Endothelial cell of umbilical vein (primary cell): ENCODE measurements at regions of chr2 and their contacts with region 1.

Region 1: GRCh38 chr2:69914170-69914960 is 544 bp upstream of the MXD1 start:
- DNase-seq: peak; percentile 100
- H3K4me3 ChIP-seq: peak overlapping the region; percentile 62 to 76 (median 65)
- H3K27ac ChIP-seq: peak overlapping the region; percentile 84
- H3K4me1 ChIP-seq: peaks cover 35% of the 10 kb centered on the region
- H3K27me3 ChIP-seq: no peaks in the 10 kb centered on the region
- CTCF ChIP-seq: peak in 1 of 2 donors; percentile 25
- POLR2A ChIP-seq: peak; percentile 84

Region 2: GRCh38 chr2:69893684-69894551 is 20.4 kb before region 1 on chr2 and contains the start of gene SNRNP27:
- CTCF ChIA-PET with region 1: no interaction called
- POLR2A ChIA-PET with region 1: interaction called, 3 read pairs
- dilution Hi-C with region 1: no loop called
- intact Hi-C with region 1: loop called (anchors 2 kb)
- DNase-seq: peak; percentile 70
- H3K4me3 ChIP-seq: peak within 1 kb of the TSS; percentile 76 to 97 (median 91)
- H3K27ac ChIP-seq: peak within 1 kb of the TSS; percentile 90
- H3K4me1 ChIP-seq: peaks cover 10% of the 10 kb centered on the region
- H3K27me3 ChIP-seq: no peaks in the 10 kb centered on the region
- CTCF ChIP-seq: no peak
- POLR2A ChIP-seq: peak; percentile 85
- total RNA-seq, gene SNRNP27: 43.2 and 50.6 TPM in 2 replicates

Region 3: DNA sequence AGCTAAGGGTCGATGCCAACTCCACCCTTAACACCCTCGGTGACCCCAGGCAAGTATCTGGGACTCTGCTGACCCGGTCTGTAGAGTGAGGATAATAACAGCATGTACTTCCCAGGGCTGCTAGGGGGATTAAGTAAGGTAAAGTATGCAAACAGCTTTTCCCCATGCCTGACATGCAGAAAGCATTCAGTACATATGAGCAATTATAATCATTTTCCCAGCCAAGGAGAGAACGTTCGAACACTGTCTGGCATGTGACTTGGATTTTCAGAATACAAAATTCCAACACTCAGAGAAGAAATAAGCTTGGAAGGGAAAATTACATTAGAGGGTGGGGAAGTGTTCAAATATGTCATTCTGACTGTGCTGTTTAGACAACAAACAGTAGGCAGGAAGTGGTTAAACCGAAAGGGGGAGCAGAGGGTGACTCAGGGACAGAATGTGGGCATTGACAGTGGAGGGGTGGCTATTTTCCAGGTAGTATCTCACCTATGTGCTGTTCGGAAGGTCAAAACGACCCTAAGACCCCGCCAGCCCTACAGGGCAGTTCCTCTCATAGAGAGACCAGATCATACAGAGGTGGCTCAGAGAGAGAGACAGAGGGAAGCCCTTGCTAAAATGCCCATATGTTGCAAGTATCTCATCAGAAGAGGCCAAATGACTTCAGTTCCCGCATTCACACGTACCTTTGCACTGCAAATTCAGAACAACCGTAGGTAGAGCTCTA is 32.1 kb after region 1 on chr2:
- CTCF ChIA-PET with region 1: interaction called, 4 read pairs
- POLR2A ChIA-PET with region 1: interaction called, 5 read pairs
- dilution Hi-C with region 1: no loop called
- intact Hi-C with region 1: loop called (anchors 1 kb)
- DNase-seq: peak; percentile 41
- H3K4me3 ChIP-seq: no peak overlapping the region
- H3K27ac ChIP-seq: peak overlapping the region; percentile 54
- H3K4me1 ChIP-seq: peaks cover 25% of the 10 kb centered on the region
- H3K27me3 ChIP-seq: no peaks in the 10 kb centered on the region
- CTCF ChIP-seq: no peak
- POLR2A ChIP-seq: no peak

Region 4: GRCh38 chr2:70086838-70087701 is 172.7 kb after region 1 on chr2 and contains the start of gene PCBP1:
- CTCF ChIA-PET with region 1: interaction called, 3 read pairs
- POLR2A ChIA-PET with region 1: interaction called, 15 read pairs
- dilution Hi-C with region 1: no loop called
- intact Hi-C with region 1: loop called (anchors 1 kb)
- DNase-seq: peak; percentile 88
- H3K4me3 ChIP-seq: peak within 1 kb of the TSS; percentile 90 to 93 (median 91)
- H3K27ac ChIP-seq: peak within 1 kb of the TSS; percentile 100
- H3K4me1 ChIP-seq: peaks cover 29% of the 10 kb centered on the region
- H3K27me3 ChIP-seq: no peaks in the 10 kb centered on the region
- CTCF ChIP-seq: no peak
- POLR2A ChIP-seq: peak; percentile 96
- total RNA-seq, gene PCBP1: 342 and 360 TPM in 2 replicates

Region 5: DNA sequence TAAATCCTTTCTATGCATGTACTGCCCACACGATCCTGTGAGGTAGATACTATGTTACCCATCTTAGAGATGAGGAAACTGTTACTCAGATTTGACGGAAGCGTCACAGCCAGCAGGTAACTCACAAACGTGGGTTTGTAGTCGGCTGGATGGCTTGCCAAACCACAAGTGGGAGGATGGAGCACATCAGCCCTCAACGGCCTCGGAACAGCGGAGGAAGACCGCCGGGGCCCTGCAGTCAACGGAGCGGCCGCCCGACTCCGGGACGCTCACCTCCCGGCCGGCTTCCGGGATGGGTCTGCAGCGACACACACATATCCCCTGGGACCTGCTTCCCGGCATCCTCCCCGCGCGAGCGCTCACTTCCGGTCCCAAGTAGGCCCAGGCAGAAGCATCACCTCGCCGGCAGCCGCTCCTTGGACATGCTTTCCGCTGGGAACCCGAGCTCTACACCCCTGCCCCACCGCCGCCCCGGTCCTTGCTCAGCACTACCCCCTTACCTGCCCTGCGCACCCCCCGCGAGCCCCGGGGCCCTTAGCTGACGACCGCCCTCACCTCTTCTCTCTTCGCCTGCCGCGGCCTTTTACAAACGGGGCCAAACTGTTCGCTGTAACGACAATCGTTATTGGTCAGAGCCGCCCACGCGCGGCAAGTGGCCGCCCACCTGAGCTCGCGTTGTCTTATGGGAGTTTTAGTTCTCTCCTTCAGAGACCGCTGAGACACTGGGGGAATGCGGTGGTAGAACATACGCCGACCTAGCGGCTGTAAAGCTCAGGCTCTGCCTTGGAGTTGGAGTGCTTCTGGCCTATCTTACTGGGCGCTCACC is 276.3 kb after region 1 on chr2 and contains the start of gene C2orf42:
- CTCF ChIA-PET with region 1: interaction called, 8 read pairs
- POLR2A ChIA-PET with region 1: interaction called, 13 read pairs
- dilution Hi-C with region 1: no loop called
- intact Hi-C with region 1: loop called (anchors 1 kb)
- DNase-seq: peak; percentile 98
- H3K4me3 ChIP-seq: peak within 1 kb of the TSS; percentile 52 to 73 (median 60)
- H3K27ac ChIP-seq: peak within 1 kb of the TSS; percentile 67
- H3K4me1 ChIP-seq: no peaks in the 10 kb centered on the region
- H3K27me3 ChIP-seq: no peaks in the 10 kb centered on the region
- CTCF ChIP-seq: peak in 1 of 2 donors; percentile 23
- POLR2A ChIP-seq: peak; percentile 98
- total RNA-seq, gene C2orf42: 12.0 and 13.1 TPM in 2 replicates

Region 6: DNA sequence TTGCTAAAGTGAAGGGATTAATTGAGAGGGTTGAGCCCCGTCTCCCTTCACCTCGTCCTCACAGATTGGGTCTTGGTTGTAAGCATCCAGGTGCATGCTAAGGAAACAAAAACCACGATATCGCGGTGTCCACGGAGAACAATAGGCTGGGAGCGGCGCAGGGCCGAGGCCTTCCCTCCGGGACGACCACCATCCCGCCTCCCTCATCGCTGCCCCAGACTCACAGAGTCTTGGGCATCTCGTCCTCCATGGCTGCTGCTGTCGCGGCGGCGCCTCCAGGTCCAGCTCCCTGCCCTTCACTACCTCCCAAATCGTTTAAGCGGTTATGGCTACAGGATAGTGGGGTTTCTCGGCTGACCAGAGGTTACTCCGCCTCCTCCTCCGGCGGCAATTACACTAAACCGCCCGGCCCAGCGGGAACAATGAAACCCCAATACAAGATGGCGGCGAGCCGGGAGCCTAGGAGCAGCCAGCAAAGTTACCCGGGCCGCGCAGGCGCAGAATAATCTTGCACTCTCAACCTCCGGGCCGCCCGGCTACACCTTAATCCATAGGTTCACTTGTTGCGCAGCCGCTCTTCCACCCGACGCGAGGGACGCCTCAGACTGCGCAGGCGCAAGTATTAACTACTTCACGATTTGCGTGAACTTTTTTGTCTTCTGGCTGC is 333.9 kb after region 1 on chr2 and contains the start of gene TIA1:
- CTCF ChIA-PET with region 1: no interaction called
- POLR2A ChIA-PET with region 1: no interaction called
- dilution Hi-C with region 1: no loop called
- intact Hi-C with region 1: loop called (anchors 10 kb)
- DNase-seq: peak; percentile 99
- H3K4me3 ChIP-seq: peak within 1 kb of the TSS; percentile 75 to 100 (median 97)
- H3K27ac ChIP-seq: peak within 1 kb of the TSS; percentile 82
- H3K4me1 ChIP-seq: peaks cover 23% of the 10 kb centered on the region
- H3K27me3 ChIP-seq: no peaks in the 10 kb centered on the region
- CTCF ChIP-seq: no peak
- POLR2A ChIP-seq: peak; percentile 96
- total RNA-seq, gene TIA1: 140 and 163 TPM in 2 replicates

Region 7: GRCh38 chr2:70523996-70524965 is 609.9 kb after region 1 on chr2:
- CTCF ChIA-PET with region 1: no interaction called
- POLR2A ChIA-PET with region 1: no interaction called
- dilution Hi-C with region 1: no loop called
- intact Hi-C with region 1: no loop called
- DNase-seq: no peak
- H3K4me3 ChIP-seq: no peak overlapping the region
- H3K27ac ChIP-seq: no peak overlapping the region
- H3K4me1 ChIP-seq: no peaks in the 10 kb centered on the region
- H3K27me3 ChIP-seq: peaks cover 0 to 3% of the 10 kb centered on the region in 2 experiments
- CTCF ChIP-seq: no peak
- POLR2A ChIP-seq: no peak